ENCODE measurements at regions of chr14 and their contacts with region 1.

Region 1: GRCh38 chr14:65287264-65288131 is 125.0 kb upstream of the FUT8 start:
- DNase-seq: no peak
- ATAC-seq: no peak
- H3K4me3 ChIP-seq: no peak overlapping the region
- H3K27ac ChIP-seq: no peak overlapping the region
- H3K4me1 ChIP-seq: peaks cover 6 to 43% of the 10 kb centered on the region in 2 experiments
- H3K27me3 ChIP-seq: no peaks in the 10 kb centered on the region
- CTCF ChIP-seq: no peak
- POLR2A ChIP-seq: no peak
- RAD21 ChIP-seq: no peak

Region 2: DNA sequence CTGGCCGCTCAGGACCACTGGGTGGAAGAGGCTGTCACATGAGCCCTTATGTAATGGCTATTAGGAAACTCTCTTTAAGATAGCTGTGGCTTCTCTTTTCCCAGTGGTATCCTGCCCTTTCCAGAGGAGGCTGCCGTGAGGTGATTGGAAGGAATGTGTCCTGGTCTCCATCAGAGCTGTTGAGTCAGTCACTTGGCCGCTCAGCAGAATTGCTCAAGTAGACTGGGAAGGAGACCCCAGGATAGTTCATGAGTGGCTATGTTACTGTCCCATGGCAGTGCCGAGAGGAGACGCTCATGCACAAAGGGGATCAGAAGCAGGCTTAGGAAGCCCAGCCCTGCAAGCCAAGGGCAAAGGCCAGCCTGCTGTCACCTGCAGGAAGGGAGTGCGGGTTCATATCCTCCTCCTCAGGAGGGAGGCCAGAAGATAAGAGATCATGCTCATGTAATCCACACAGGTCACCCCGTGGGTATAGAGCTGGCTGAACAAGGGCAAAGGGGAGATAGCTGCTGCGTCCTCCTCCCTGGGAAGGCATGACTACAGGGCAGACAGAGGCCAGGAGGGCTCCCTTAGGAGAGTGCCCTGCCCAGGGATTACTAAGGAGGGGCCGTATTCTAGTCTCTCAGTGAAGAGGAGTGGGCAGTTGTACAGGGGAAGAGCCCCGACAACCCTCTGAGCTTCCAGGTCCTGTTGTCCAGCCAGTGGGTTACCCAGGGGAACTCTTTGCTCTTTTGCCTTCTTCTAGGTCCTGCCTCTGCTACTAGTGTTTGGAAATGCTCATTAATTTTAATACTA is 48.2 kb before region 1 on chr14:
- CTCF ChIA-PET with region 1: interaction called, 3 read pairs
- POLR2A ChIA-PET with region 1: interaction called, 3 read pairs
- RAD21 ChIA-PET with region 1: no interaction called
- intact Hi-C with region 1: loop called (anchors 5 kb)
- DNase-seq: no peak
- ATAC-seq: peak; percentile 32
- H3K4me3 ChIP-seq: peak overlapping the region; percentile 44 to 49
- H3K27ac ChIP-seq: peak overlapping the region; percentile 41
- H3K4me1 ChIP-seq: peaks cover 33 to 59% of the 10 kb centered on the region in 2 experiments
- H3K27me3 ChIP-seq: no peaks in the 10 kb centered on the region
- CTCF ChIP-seq: no peak
- POLR2A ChIP-seq: no peak
- RAD21 ChIP-seq: no peak

Region 3: DNA sequence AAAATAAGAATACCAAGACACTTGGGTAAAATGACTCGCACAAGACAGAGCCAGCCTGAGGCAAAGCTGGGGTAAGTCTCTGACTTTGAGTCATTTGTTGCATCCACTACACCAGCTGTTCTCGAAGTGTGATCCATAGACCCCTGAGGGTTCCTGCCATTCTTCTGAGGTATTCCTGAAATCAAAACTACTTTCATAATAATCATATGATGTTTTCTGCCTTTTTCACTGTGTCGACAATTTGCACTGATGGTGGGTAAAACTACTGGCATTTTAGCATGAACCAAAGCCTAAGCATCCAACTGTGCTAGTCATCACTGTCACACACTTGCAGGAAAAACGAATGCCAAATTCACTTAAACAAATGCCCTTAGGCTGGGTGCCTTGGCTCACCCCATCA is 10.5 kb before region 1 on chr14:
- CTCF ChIA-PET with region 1: no interaction called
- POLR2A ChIA-PET with region 1: no interaction called
- RAD21 ChIA-PET with region 1: no interaction called
- intact Hi-C with region 1: no loop called
- DNase-seq: no peak
- ATAC-seq: no peak
- H3K4me3 ChIP-seq: no peak overlapping the region
- H3K27ac ChIP-seq: no peak overlapping the region
- H3K4me1 ChIP-seq: no peaks in the 10 kb centered on the region
- H3K27me3 ChIP-seq: no peaks in the 10 kb centered on the region
- CTCF ChIP-seq: no peak
- POLR2A ChIP-seq: no peak
- RAD21 ChIP-seq: no peak

Region 4: GRCh38 chr14:65637780-65638179 is 350.3 kb after region 1 on chr14:
- CTCF ChIA-PET with region 1: no interaction called
- POLR2A ChIA-PET with region 1: no interaction called
- RAD21 ChIA-PET with region 1: no interaction called
- intact Hi-C with region 1: no loop called
- DNase-seq: no peak
- ATAC-seq: no peak
- H3K4me3 ChIP-seq: no peak overlapping the region
- H3K27ac ChIP-seq: no peak overlapping the region
- H3K4me1 ChIP-seq: no peaks in the 10 kb centered on the region
- H3K27me3 ChIP-seq: no peaks in the 10 kb centered on the region
- CTCF ChIP-seq: no peak
- POLR2A ChIP-seq: no peak
- RAD21 ChIP-seq: no peak

Measured in HCT116 (cell line).